CD8-positive, alpha-beta T cell (primary cell): ENCODE measurements at regions of chr4 and their contacts with region 1.

Region 1: DNA sequence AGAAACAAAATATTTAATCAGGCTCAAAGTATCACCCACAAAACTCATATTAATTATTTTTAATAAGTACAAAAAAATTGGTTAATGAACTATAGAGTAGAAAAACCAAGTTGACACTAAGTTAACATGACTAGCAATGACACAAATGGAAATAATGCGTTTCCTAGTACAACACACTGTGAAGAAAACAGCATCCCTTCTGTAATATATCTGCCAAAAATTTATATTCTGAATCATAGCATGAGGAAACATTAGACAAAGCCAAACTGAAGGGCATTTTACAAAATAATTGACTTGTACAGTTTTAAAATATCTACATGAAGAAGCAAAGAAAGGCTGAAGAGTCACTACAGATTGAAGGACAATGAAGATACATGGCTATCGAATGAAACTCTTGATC is 477.6 kb upstream of the INTU start:
- DNase-seq: no peak
- ATAC-seq: no peak
- H3K4me3 ChIP-seq: no peak overlapping the region
- H3K4me3 Mint-ChIP-seq: no peak overlapping the region
- H3K27ac ChIP-seq: no peak overlapping the region
- H3K27ac Mint-ChIP-seq: no peak overlapping the region
- H3K4me1 ChIP-seq: no peaks in the 10 kb centered on the region
- H3K4me1 Mint-ChIP-seq: no peaks in the 10 kb centered on the region
- H3K27me3 ChIP-seq: no peaks in the 10 kb centered on the region
- H3K27me3 Mint-ChIP-seq: no peaks in the 10 kb centered on the region
- CTCF ChIP-seq: no peak

Region 2: GRCh38 chr4:126794363-126794762 is 360.8 kb before region 1 on chr4:
- CTCF ChIA-PET with region 1: no interaction called
- POLR2A ChIA-PET with region 1: no interaction called
- intact Hi-C with region 1: loop called in 1 of 2 experiments (anchors 5 kb)
- DNase-seq: no peak
- ATAC-seq: no peak
- H3K4me3 ChIP-seq: no peak overlapping the region
- H3K4me3 Mint-ChIP-seq: no peak overlapping the region
- H3K27ac ChIP-seq: no peak overlapping the region
- H3K27ac Mint-ChIP-seq: no peak overlapping the region
- H3K4me1 ChIP-seq: no peaks in the 10 kb centered on the region
- H3K4me1 Mint-ChIP-seq: no peaks in the 10 kb centered on the region
- H3K27me3 ChIP-seq: no peaks in the 10 kb centered on the region
- H3K27me3 Mint-ChIP-seq: no peaks in the 10 kb centered on the region
- CTCF ChIP-seq: no peak

Region 3: GRCh38 chr4:127211650-127212560 is 56.8 kb after region 1 on chr4:
- CTCF ChIA-PET with region 1: no interaction called
- POLR2A ChIA-PET with region 1: no interaction called
- intact Hi-C with region 1: loop called in 1 of 2 experiments (anchors 2 kb)
- DNase-seq: no peak
- ATAC-seq: no peak
- H3K4me3 ChIP-seq: no peak overlapping the region
- H3K4me3 Mint-ChIP-seq: no peak overlapping the region
- H3K27ac ChIP-seq: no peak overlapping the region
- H3K27ac Mint-ChIP-seq: no peak overlapping the region
- H3K4me1 ChIP-seq: no peaks in the 10 kb centered on the region
- H3K4me1 Mint-ChIP-seq: no peaks in the 10 kb centered on the region
- H3K27me3 ChIP-seq: no peaks in the 10 kb centered on the region
- H3K27me3 Mint-ChIP-seq: no peaks in the 10 kb centered on the region
- CTCF ChIP-seq: no peak